ENCODE measurements at regions of chr20 and their contacts with region 1.

Region 1: DNA sequence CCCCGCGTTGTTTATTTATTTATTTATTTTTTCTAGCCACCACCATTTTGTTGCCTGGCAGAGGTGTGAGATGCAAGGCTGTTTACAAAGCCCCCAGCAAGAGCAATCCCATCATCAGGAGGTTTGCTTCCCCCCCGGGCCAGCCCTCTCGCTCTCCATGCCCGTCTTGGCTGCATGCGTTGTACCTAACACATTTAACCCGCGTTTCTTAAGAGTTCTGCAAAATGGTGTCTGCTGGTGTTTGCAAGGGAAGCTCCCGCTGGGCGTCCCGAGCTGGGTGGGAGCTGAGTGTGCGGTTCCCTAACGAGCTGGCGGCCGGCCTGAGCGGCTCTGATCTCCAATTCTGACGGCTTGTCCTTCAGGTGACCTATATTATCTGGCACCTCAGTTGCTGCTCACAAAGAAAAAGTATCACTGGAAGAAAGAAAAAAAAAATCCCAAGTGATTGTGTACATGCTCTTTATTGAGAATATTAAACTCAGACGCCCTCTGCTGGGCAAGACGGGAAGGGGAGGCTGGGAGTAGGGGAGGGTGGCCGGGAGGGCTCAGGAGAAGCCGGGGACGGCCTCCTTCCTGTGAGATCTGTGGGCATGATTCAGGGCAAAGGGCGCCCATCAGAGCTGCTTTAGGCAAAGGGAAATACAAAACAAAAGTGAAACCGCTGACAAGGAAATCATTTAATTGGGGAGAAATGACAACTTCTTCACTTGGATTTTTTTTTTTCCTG is 154.8 kb downstream of the BCAS1 start:
- DNase-seq: peak; percentile 89
- ATAC-seq: peak; percentile 84
- H3K4me3 ChIP-seq: peak overlapping the region; percentile 56
- H3K27ac ChIP-seq: peak overlapping the region; percentile 97
- H3K4me1 ChIP-seq: peaks cover 31% of the 10 kb centered on the region
- H3K27me3 ChIP-seq: no peaks in the 10 kb centered on the region
- CTCF ChIP-seq: peak; percentile 80 to 93 (median 90)
- EP300 ChIP-seq: no peak
- POLR2A ChIP-seq: peak; percentile 31; the same call in 1 of the 2 replicates
- RAD21 ChIP-seq: peak; percentile 94

Region 2: GRCh38 chr20:53623454-53624211 is 292.0 kb before region 1 on chr20:
- CTCF ChIA-PET with region 1: interaction called, 23 read pairs
- POLR2A ChIA-PET with region 1: interaction called, 3 read pairs
- RAD21 ChIA-PET with region 1: interaction called, 9 read pairs
- SMC1A ChIA-PET with region 1: interaction called, 4 read pairs
- in situ Hi-C with region 1: no loop called
- intact Hi-C with region 1: no loop called
- DNase-seq: peak; percentile 60
- ATAC-seq: peak; percentile 81
- H3K4me3 ChIP-seq: peak overlapping the region; percentile 54
- H3K27ac ChIP-seq: peak overlapping the region; percentile 99
- H3K4me1 ChIP-seq: peaks cover 38% of the 10 kb centered on the region
- H3K27me3 ChIP-seq: no peaks in the 10 kb centered on the region
- CTCF ChIP-seq: 0 out of 6 replicates have a peak, but pooled peaks of 1 of the 3 experiments have one; percentile 8
- EP300 ChIP-seq: no peak
- POLR2A ChIP-seq: peak; percentile 61
- RAD21 ChIP-seq: 0 out of 2 replicates have a peak, but pooled peaks have one; percentile 10

Region 3: DNA sequence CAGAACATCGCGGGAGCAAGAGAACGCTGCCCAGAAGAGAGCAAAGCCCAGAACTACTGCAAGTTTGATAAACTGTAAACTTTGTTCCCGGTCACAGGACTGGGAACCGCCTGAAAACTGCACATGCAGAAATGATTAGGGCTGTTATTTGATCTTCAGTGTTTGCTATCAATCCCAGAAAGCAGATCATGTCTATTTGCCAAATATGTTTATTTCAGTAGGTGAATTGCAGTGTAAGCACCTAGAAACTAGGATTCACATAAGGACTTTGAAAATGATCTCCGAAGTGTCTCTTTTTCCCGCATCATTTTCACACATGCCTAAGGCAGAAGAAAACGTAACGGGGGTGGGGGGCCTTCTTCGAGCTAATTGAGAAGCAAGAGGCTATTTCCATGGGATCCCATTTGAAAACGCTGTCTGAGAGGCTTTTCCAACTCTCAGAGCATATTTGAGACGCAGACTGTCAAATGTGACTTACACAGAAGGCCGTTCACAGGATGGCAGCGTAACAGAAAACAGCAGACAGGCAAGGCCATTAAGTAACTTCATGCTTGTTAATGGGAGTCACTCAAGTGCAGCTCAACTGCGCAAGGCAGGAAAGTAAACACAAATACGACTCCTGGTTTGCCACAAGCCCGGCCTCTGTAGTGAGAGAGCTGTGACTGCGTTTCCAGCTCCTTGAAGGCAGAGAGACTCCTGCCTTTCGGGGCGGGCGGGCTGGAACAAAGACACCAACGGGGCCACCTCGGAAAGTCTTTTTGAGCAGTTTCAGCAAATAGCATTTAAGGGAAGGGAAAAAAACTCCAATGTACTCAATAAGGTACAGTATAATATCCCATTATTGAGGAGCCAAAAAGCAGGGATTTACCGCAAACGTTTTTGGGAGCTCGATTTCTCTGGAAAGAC is 177.3 kb before region 1 on chr20:
- CTCF ChIA-PET with region 1: interaction called, 10 read pairs
- POLR2A ChIA-PET with region 1: interaction called, 5 read pairs
- RAD21 ChIA-PET with region 1: interaction called, 22 read pairs
- SMC1A ChIA-PET with region 1: interaction called, 31 read pairs
- in situ Hi-C with region 1: no loop called
- intact Hi-C with region 1: no loop called
- DNase-seq: no peak
- ATAC-seq: no peak
- H3K4me3 ChIP-seq: 0 out of 2 replicates have a peak overlapping the region, but pooled peaks have one; percentile 69
- H3K27ac ChIP-seq: peak overlapping the region; percentile 86
- H3K4me1 ChIP-seq: peaks cover 56% of the 10 kb centered on the region
- H3K27me3 ChIP-seq: no peaks in the 10 kb centered on the region
- CTCF ChIP-seq: no peak
- EP300 ChIP-seq: no peak
- POLR2A ChIP-seq: no peak
- RAD21 ChIP-seq: no peak

Region 4: GRCh38 chr20:53839423-53840176 is 76.0 kb before region 1 on chr20:
- CTCF ChIA-PET with region 1: interaction called, 11 read pairs
- POLR2A ChIA-PET with region 1: no interaction called
- RAD21 ChIA-PET with region 1: interaction called, 10 read pairs
- SMC1A ChIA-PET with region 1: interaction called, 16 read pairs
- in situ Hi-C with region 1: no loop called
- intact Hi-C with region 1: loop called (anchors 2 kb)
- DNase-seq: peak; percentile 96
- ATAC-seq: peak; percentile 78
- H3K4me3 ChIP-seq: no peak overlapping the region
- H3K27ac ChIP-seq: peak overlapping the region; percentile 70
- H3K4me1 ChIP-seq: peaks cover 47% of the 10 kb centered on the region
- H3K27me3 ChIP-seq: no peaks in the 10 kb centered on the region
- CTCF ChIP-seq: no peak
- EP300 ChIP-seq: peak; percentile 39 to 54; a peak in 2 of 4 replicates
- POLR2A ChIP-seq: peak; percentile 53; the same call in 1 of the 2 replicates
- RAD21 ChIP-seq: 0 out of 2 replicates have a peak, but pooled peaks have one; percentile 3

Region 5: GRCh38 chr20:53905019-53905847 is 10.4 kb before region 1 on chr20:
- CTCF ChIA-PET with region 1: interaction called, 19 read pairs
- POLR2A ChIA-PET with region 1: interaction called, 20 read pairs
- RAD21 ChIA-PET with region 1: interaction called, 51 read pairs
- SMC1A ChIA-PET with region 1: interaction called, 117 read pairs
- in situ Hi-C with region 1: no loop called
- intact Hi-C with region 1: no loop called
- DNase-seq: no peak
- ATAC-seq: peak; percentile 51
- H3K4me3 ChIP-seq: 0 out of 2 replicates have a peak overlapping the region, but pooled peaks have one; percentile 15
- H3K27ac ChIP-seq: peak overlapping the region; percentile 72
- H3K4me1 ChIP-seq: peaks cover 43% of the 10 kb centered on the region
- H3K27me3 ChIP-seq: no peaks in the 10 kb centered on the region
- CTCF ChIP-seq: no peak
- EP300 ChIP-seq: peak in 1 of 2 experiments; percentile 50; a peak in 1 of 4 replicates
- POLR2A ChIP-seq: no peak
- RAD21 ChIP-seq: no peak

Region 6: GRCh38 chr20:54062812-54063280 is 147.2 kb after region 1 on chr20:
- CTCF ChIA-PET with region 1: interaction called, 37 read pairs
- POLR2A ChIA-PET with region 1: no interaction called
- RAD21 ChIA-PET with region 1: interaction called, 44 read pairs
- SMC1A ChIA-PET with region 1: interaction called, 27 read pairs
- in situ Hi-C with region 1: no loop called
- intact Hi-C with region 1: no loop called
- DNase-seq: peak; percentile 82
- ATAC-seq: peak; percentile 42
- H3K4me3 ChIP-seq: no peak overlapping the region
- H3K27ac ChIP-seq: 0 out of 2 replicates have a peak overlapping the region, but pooled peaks have one; percentile 73
- H3K4me1 ChIP-seq: peaks cover 29% of the 10 kb centered on the region
- H3K27me3 ChIP-seq: no peaks in the 10 kb centered on the region
- CTCF ChIP-seq: peak; percentile 59 to 82 (median 73)
- EP300 ChIP-seq: no peak
- POLR2A ChIP-seq: no peak
- RAD21 ChIP-seq: peak; percentile 94

Measured in GM12878 (cell line).